ENCODE measurements at regions of chr15 and their contacts with region 1.

Region 1: GRCh38 chr15:44308415-44308814 is 19.9 kb downstream of the GOLM2 start:
- DNase-seq: no peak
- ATAC-seq: no peak
- H3K4me3 ChIP-seq: no peak overlapping the region
- H3K27ac ChIP-seq: no peak overlapping the region
- H3K4me1 ChIP-seq: peaks cover 0 to 22% (median 0%) of the 10 kb centered on the region in 12 donors
- H3K27me3 ChIP-seq: no peaks in the 10 kb centered on the region
- CTCF ChIP-seq: no peak
- POLR2A ChIP-seq: no peak

Region 2: GRCh38 chr15:44286814-44287452 is 21.5 kb before region 1 on chr15:
- intact Hi-C with region 1: loop called in 1 of 10 experiments (anchors 2 kb)
- DNase-seq: no peak
- ATAC-seq: no peak
- H3K4me3 ChIP-seq: peak overlapping the region in 10 of 12 donors; percentile 69 to 98 (median 92)
- H3K27ac ChIP-seq: peak overlapping the region in 5 of 12 donors; percentile 88 to 95 (median 93)
- H3K4me1 ChIP-seq: peaks cover 0 to 34% (median 23%) of the 10 kb centered on the region in 12 donors
- H3K27me3 ChIP-seq: peaks cover 0 to 4% (median 0%) of the 10 kb centered on the region in 9 donors
- CTCF ChIP-seq: peak in 4 of 12 donors; percentile 2 to 40 (median 32)
- POLR2A ChIP-seq: no peak

Region 3: DNA sequence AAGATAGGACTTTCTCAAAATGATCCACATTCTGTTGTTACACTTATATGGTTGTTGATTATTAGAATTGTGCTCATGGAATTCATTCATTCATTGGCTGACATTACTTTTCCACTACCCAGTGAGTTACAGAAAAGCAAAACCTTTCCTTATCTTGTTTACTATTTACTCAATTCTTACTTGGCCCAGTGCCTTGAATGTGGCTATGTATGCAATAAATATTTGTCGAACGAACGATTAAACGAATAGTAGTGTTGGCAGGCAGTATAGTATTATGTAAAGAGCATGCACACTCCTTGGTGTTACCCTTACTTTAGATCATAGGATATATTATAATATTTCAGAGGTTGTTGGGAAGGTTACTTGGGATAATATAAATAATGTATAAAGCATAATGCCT is 150.0 kb after region 1 on chr15:
- intact Hi-C with region 1: no loop called
- DNase-seq: no peak
- ATAC-seq: no peak
- H3K4me3 ChIP-seq: no peak overlapping the region
- H3K27ac ChIP-seq: no peak overlapping the region
- H3K4me1 ChIP-seq: peaks cover 0 to 17% (median 0%) of the 10 kb centered on the region in 12 donors
- H3K27me3 ChIP-seq: no peaks in the 10 kb centered on the region
- CTCF ChIP-seq: no peak
- POLR2A ChIP-seq: no peak

Measured in heart left ventricle (tissue), 16 donors.